ENCODE measurements at regions of chr18 and their contacts with region 1.

Region 1: DNA sequence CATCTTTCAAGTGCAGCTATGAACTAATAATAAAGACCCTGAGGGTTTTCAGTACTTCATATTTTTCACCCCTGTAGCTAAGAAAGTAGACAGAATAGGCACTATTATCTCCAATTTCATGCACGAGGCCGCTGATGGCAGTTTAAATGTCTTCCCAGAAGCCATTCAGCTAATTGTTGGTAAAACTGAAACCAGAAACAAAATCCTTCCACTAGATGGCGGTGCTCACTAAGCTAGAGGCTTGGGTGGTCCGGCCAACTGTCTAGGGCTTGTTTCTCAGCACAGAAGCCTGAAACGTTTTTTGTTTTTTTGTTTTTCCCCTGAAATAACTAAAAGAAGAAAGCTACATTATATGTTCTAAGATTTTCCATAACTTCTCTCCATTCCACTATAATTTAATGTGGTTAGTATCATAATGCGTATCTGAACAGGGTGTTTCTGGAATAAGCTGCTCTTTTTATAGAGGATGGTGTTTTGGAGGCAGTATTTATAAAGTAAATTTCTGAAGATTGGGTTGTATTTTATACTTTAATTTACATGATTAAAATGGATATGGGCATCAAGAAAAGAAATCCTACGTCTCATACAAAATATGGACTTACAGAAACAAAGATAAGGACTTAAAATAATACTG is 159.4 kb downstream of the PIK3C3 start:
- DNase-seq: peak; percentile 42
- ATAC-seq: peak; percentile 96
- H3K4me3 ChIP-seq: no peak overlapping the region
- H3K27ac ChIP-seq: no peak overlapping the region; the same call in 1 of the 2 replicates
- H3K4me1 ChIP-seq: peaks cover 11% of the 10 kb centered on the region
- H3K27me3 ChIP-seq: no peaks in the 10 kb centered on the region
- CTCF ChIP-seq: peak; percentile 77 to 93 (median 84)
- EP300 ChIP-seq: no peak
- POLR2A ChIP-seq: no peak
- RAD21 ChIP-seq: peak; percentile 99

Region 2: DNA sequence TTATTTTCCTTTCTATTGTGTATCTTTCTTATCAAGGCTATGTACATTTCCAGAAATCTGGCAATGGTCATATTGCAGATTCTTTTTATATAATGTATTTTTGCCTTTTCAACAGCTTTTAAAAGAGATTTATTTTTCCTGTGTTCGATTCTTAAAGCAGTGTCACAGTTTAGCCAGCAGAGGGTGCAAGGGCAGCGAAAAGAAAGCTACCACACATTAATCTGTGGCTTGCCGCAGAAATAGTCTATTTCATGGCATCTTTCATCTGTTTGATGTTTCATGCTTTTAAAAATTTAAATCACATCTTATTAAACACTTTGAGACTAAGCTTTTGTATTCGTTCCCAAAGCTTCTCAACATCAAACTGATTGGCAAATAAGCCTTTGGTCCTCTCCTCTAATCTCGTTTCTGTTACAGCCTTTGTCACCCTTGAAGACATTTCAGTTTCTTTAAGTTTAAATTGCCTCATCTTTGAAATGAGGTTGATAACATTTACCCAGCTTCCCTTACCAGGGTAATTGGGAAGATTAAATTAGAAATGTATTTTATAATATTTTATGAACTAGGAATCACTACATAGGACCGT is 86.1 kb before region 1 on chr18:
- CTCF ChIA-PET with region 1: interaction called, 11 read pairs
- POLR2A ChIA-PET with region 1: no interaction called
- RAD21 ChIA-PET with region 1: interaction called, 14 read pairs
- SMC1A ChIA-PET with region 1: interaction called, 5 read pairs
- in situ Hi-C with region 1: no loop called
- intact Hi-C with region 1: no loop called
- DNase-seq: no peak
- ATAC-seq: 0 out of 3 replicates have a peak, but pooled peaks have one; percentile 22
- H3K4me3 ChIP-seq: no peak overlapping the region
- H3K27ac ChIP-seq: no peak overlapping the region
- H3K4me1 ChIP-seq: peaks cover 33% of the 10 kb centered on the region
- H3K27me3 ChIP-seq: no peaks in the 10 kb centered on the region
- CTCF ChIP-seq: peak; percentile 63 to 77 (median 74)
- EP300 ChIP-seq: no peak
- POLR2A ChIP-seq: no peak
- RAD21 ChIP-seq: peak; percentile 40; the same call in 1 of the 2 replicates

Region 3: GRCh38 chr18:42141439-42141838 is 27.0 kb after region 1 on chr18:
- CTCF ChIA-PET with region 1: interaction called, 18 read pairs
- POLR2A ChIA-PET with region 1: no interaction called
- RAD21 ChIA-PET with region 1: interaction called, 4 read pairs
- SMC1A ChIA-PET with region 1: interaction called, 14 read pairs
- in situ Hi-C with region 1: no loop called
- intact Hi-C with region 1: no loop called
- DNase-seq: no peak
- ATAC-seq: no peak
- H3K4me3 ChIP-seq: no peak overlapping the region
- H3K27ac ChIP-seq: no peak overlapping the region
- H3K4me1 ChIP-seq: no peaks in the 10 kb centered on the region
- H3K27me3 ChIP-seq: no peaks in the 10 kb centered on the region
- CTCF ChIP-seq: no peak
- EP300 ChIP-seq: no peak
- POLR2A ChIP-seq: no peak
- RAD21 ChIP-seq: no peak

Region 4: GRCh38 chr18:42192251-42193248 is 78.1 kb after region 1 on chr18:
- CTCF ChIA-PET with region 1: interaction called, 67 read pairs
- POLR2A ChIA-PET with region 1: interaction called, 7 read pairs
- RAD21 ChIA-PET with region 1: interaction called, 81 read pairs
- SMC1A ChIA-PET with region 1: interaction called, 135 read pairs
- in situ Hi-C with region 1: no loop called
- intact Hi-C with region 1: loop called (anchors 2 kb)
- DNase-seq: no peak
- ATAC-seq: 0 out of 3 replicates have a peak, but pooled peaks have one; percentile 7
- H3K4me3 ChIP-seq: no peak overlapping the region
- H3K27ac ChIP-seq: no peak overlapping the region
- H3K4me1 ChIP-seq: no peaks in the 10 kb centered on the region
- H3K27me3 ChIP-seq: no peaks in the 10 kb centered on the region
- CTCF ChIP-seq: no peak
- EP300 ChIP-seq: no peak
- POLR2A ChIP-seq: no peak
- RAD21 ChIP-seq: no peak

Region 5: DNA sequence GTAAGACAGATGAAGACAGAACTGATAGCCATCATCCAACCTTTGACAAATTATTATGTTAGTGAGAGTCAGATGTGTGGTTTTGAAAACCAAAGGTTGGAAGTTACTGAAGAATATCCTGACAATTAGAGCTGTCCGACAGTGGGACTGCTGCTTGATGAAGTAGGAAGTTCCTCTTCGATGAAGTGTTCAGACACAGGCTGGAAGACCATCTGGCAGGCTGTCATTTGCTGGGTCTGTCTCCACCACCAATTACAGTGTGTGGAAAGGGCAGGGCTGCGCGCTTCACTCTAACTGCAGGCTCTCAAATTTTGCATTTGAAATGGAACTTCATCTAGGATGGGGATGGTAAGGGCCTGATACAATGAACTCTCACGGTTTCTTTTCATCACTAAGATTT is 154.4 kb after region 1 on chr18:
- CTCF ChIA-PET with region 1: interaction called, 204 read pairs
- POLR2A ChIA-PET with region 1: interaction called, 3 read pairs
- RAD21 ChIA-PET with region 1: interaction called, 115 read pairs
- SMC1A ChIA-PET with region 1: interaction called, 191 read pairs
- in situ Hi-C with region 1: no loop called
- intact Hi-C with region 1: no loop called
- DNase-seq: no peak
- ATAC-seq: no peak
- H3K4me3 ChIP-seq: no peak overlapping the region
- H3K27ac ChIP-seq: no peak overlapping the region
- H3K4me1 ChIP-seq: no peaks in the 10 kb centered on the region
- H3K27me3 ChIP-seq: no peaks in the 10 kb centered on the region
- CTCF ChIP-seq: no peak
- EP300 ChIP-seq: no peak
- POLR2A ChIP-seq: no peak
- RAD21 ChIP-seq: no peak

Region 6: DNA sequence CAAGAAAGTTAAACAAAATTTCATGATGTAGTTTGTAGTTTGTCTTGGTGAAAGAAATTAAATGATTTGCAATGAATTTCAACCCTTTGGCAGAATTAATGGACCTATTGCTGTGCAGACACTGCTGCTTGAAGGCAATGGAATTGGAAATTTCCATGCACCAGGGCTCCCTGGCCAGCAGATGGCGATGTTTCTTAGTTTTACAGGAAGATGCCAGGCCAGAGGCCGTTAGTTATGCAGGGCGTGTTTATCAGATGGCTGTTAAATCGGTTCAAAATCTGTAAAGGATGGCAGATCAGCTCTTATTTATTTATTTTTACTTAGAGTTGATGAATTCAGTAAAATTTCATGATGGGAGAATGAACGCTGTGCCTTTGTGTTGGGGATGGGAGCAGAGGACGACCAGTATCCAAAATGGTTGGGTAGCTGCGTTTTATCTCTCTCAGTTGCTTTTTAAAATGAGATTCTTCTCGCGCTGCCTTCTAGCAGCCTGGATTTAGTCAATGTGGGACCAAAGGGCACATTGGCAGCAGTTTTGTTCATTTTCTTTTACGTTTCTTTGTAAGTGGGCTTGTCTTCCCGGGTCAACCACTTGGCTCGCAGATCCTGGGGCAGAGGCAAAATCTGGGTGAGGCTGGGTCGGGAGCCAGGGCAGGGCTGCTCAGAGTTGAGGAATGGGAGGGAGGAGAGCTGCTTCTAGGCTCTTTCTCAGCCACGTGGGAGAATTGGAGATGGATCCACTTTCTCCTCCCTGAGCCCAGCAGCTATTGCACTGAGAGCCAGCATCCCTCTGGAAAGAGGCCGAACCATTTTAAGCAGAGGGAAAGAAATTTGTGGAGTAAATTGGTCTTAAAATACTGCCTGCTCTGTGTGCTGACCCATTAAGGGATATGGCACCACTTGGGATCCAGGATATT is 184.6 kb after region 1 on chr18:
- CTCF ChIA-PET with region 1: interaction called, 107 read pairs
- POLR2A ChIA-PET with region 1: no interaction called
- RAD21 ChIA-PET with region 1: interaction called, 82 read pairs
- SMC1A ChIA-PET with region 1: interaction called, 114 read pairs
- in situ Hi-C with region 1: no loop called
- intact Hi-C with region 1: loop called (anchors 2 kb)
- DNase-seq: no peak
- ATAC-seq: peak; percentile 95
- H3K4me3 ChIP-seq: no peak overlapping the region
- H3K27ac ChIP-seq: no peak overlapping the region
- H3K4me1 ChIP-seq: no peaks in the 10 kb centered on the region
- H3K27me3 ChIP-seq: no peaks in the 10 kb centered on the region
- CTCF ChIP-seq: peak; percentile 85 to 89 (median 85)
- EP300 ChIP-seq: no peak
- POLR2A ChIP-seq: no peak
- RAD21 ChIP-seq: peak; percentile 77

Region 7: GRCh38 chr18:42486296-42486695 is 371.9 kb after region 1 on chr18:
- CTCF ChIA-PET with region 1: no interaction called
- POLR2A ChIA-PET with region 1: no interaction called
- RAD21 ChIA-PET with region 1: no interaction called
- SMC1A ChIA-PET with region 1: no interaction called
- in situ Hi-C with region 1: no loop called
- intact Hi-C with region 1: no loop called
- DNase-seq: no peak
- ATAC-seq: no peak
- H3K4me3 ChIP-seq: no peak overlapping the region
- H3K27ac ChIP-seq: no peak overlapping the region
- H3K4me1 ChIP-seq: no peaks in the 10 kb centered on the region
- H3K27me3 ChIP-seq: no peaks in the 10 kb centered on the region
- CTCF ChIP-seq: no peak
- EP300 ChIP-seq: no peak
- POLR2A ChIP-seq: no peak
- RAD21 ChIP-seq: no peak

Region 8: GRCh38 chr18:43396266-43396665 is 1281.8 kb after region 1 on chr18:
- CTCF ChIA-PET with region 1: no interaction called
- POLR2A ChIA-PET with region 1: no interaction called
- RAD21 ChIA-PET with region 1: no interaction called
- SMC1A ChIA-PET with region 1: interaction called, 3 read pairs
- in situ Hi-C with region 1: no loop called
- intact Hi-C with region 1: loop called (anchors 5 kb)
- DNase-seq: no peak
- ATAC-seq: 0 out of 3 replicates have a peak, but pooled peaks have one; percentile 26
- H3K4me3 ChIP-seq: no peak overlapping the region
- H3K27ac ChIP-seq: no peak overlapping the region
- H3K4me1 ChIP-seq: no peaks in the 10 kb centered on the region
- H3K27me3 ChIP-seq: no peaks in the 10 kb centered on the region
- CTCF ChIP-seq: peak; percentile 17 to 30 (median 29); a peak in 3 of 6 replicates
- EP300 ChIP-seq: no peak
- POLR2A ChIP-seq: no peak
- RAD21 ChIP-seq: peak; percentile 39